ENCODE measurements at regions of chrX and their contacts with region 1.

Region 1: GRCh38 chrX:143788265-143788664 is 67.7 kb upstream of the SPANXN2 start:
- DNase-seq: no peak
- ATAC-seq: no peak
- H3K4me3 ChIP-seq: no peak overlapping the region
- H3K27ac ChIP-seq: no peak overlapping the region
- H3K4me1 ChIP-seq: no peaks in the 10 kb centered on the region
- H3K27me3 ChIP-seq: no peaks in the 10 kb centered on the region
- CTCF ChIP-seq: peak; percentile 22 to 29 (median 26); a peak in 3 of 6 replicates
- EP300 ChIP-seq: no peak
- POLR2A ChIP-seq: no peak
- RAD21 ChIP-seq: peak; percentile 34; the same call in 1 of the 2 replicates

Region 2: GRCh38 chrX:143800150-143800549 is 11.9 kb after region 1 on chrX:
- CTCF ChIA-PET with region 1: interaction called, 14 read pairs
- POLR2A ChIA-PET with region 1: no interaction called
- RAD21 ChIA-PET with region 1: no interaction called
- SMC1A ChIA-PET with region 1: no interaction called
- in situ Hi-C with region 1: no loop called
- intact Hi-C with region 1: no loop called
- DNase-seq: no peak
- ATAC-seq: no peak
- H3K4me3 ChIP-seq: no peak overlapping the region
- H3K27ac ChIP-seq: no peak overlapping the region
- H3K4me1 ChIP-seq: no peaks in the 10 kb centered on the region
- H3K27me3 ChIP-seq: no peaks in the 10 kb centered on the region
- CTCF ChIP-seq: no peak
- EP300 ChIP-seq: no peak
- POLR2A ChIP-seq: no peak
- RAD21 ChIP-seq: no peak

Region 3: GRCh38 chrX:144219035-144219434 is 430.8 kb after region 1 on chrX:
- CTCF ChIA-PET with region 1: interaction called, 10 read pairs
- POLR2A ChIA-PET with region 1: no interaction called
- RAD21 ChIA-PET with region 1: no interaction called
- SMC1A ChIA-PET with region 1: interaction called, 8 read pairs
- in situ Hi-C with region 1: no loop called
- intact Hi-C with region 1: no loop called
- DNase-seq: no peak
- ATAC-seq: peak; percentile 57; the same call in 2 of the 3 replicates
- H3K4me3 ChIP-seq: no peak overlapping the region
- H3K27ac ChIP-seq: no peak overlapping the region
- H3K4me1 ChIP-seq: no peaks in the 10 kb centered on the region
- H3K27me3 ChIP-seq: no peaks in the 10 kb centered on the region
- CTCF ChIP-seq: peak in 1 of 3 experiments; percentile 16; a peak in 1 of 6 replicates
- EP300 ChIP-seq: no peak
- POLR2A ChIP-seq: no peak
- RAD21 ChIP-seq: peak; percentile 18; the same call in 1 of the 2 replicates

Measured in GM12878 (cell line).